ENCODE measurements at regions of chr3 and their contacts with region 1.

Region 1: DNA sequence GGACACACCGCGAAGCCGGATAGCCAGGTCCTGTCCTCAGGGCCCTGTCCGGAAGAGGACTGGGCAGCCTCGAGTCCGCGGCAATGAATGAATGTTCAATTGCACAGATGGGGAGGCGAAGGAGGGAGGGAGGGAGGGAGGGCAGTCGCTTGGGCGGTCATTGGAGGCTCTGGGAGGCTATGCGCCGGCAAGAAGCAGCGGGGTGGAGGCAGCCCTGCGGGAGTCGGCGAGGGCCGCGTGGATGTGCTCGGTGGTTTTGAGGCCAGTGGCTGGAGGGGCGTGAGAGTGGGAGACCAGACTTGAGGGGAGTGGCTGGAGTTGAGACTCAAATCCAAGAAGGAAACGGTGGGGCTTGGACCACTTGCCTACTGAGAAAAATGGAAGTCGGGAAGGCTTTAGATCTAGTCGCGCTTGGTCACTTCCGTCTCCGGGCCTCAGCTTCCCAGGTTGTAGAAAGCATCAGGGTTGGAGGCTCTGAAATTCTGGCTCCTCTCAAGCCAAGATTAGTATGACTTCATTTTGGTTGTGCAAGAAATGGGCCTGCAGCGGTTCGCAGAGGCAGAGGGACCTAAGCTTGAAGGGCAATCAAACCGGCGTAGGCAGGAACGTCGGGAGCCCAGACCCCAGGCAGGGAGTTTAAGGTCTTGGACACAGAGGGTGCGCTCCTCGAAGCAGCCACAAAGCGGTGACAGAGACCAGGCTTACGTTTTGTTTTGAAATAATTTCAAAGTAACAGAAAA is 21.1 kb upstream of the PLXND1 start:
- DNase-seq: peak; percentile 87
- H3K4me3 ChIP-seq: peak overlapping the region; percentile 58 to 75 (median 62)
- H3K27ac ChIP-seq: peak overlapping the region; percentile 95 to 99 (median 96)
- H3K4me1 ChIP-seq: peaks cover 0 to 46% (median 43%) of the 10 kb centered on the region in 4 donors
- H3K27me3 ChIP-seq: no peaks in the 10 kb centered on the region
- CTCF ChIP-seq: peak; percentile 54 to 86 (median 72)
- EP300 ChIP-seq: no peak
- POLR2A ChIP-seq: no peak

Region 2: GRCh38 chr3:129673882-129674797 is 46.5 kb after region 1 on chr3:
- intact Hi-C with region 1: no loop called
- DNase-seq: no peak
- H3K4me3 ChIP-seq: no peak overlapping the region
- H3K27ac ChIP-seq: no peak overlapping the region
- H3K4me1 ChIP-seq: peaks cover 0 to 4% (median 0%) of the 10 kb centered on the region in 4 donors
- H3K27me3 ChIP-seq: no peaks in the 10 kb centered on the region
- CTCF ChIP-seq: no peak
- EP300 ChIP-seq: no peak
- POLR2A ChIP-seq: no peak

Region 3: GRCh38 chr3:129824926-129825541 is 197.4 kb after region 1 on chr3:
- intact Hi-C with region 1: loop called (anchors 1 kb)
- DNase-seq: no peak
- H3K4me3 ChIP-seq: no peak overlapping the region
- H3K27ac ChIP-seq: no peak overlapping the region
- H3K4me1 ChIP-seq: peaks cover 0 to 11% (median 4%) of the 10 kb centered on the region in 4 donors
- H3K27me3 ChIP-seq: no peaks in the 10 kb centered on the region
- CTCF ChIP-seq: peak in 3 of 4 experiments; percentile 62 to 69 (median 63)
- EP300 ChIP-seq: no peak
- POLR2A ChIP-seq: no peak

Region 4: GRCh38 chr3:130014526-130014925 is 386.9 kb after region 1 on chr3:
- intact Hi-C with region 1: loop called (anchors 10 kb)
- DNase-seq: no peak
- H3K4me3 ChIP-seq: no peak overlapping the region
- H3K27ac ChIP-seq: no peak overlapping the region
- H3K4me1 ChIP-seq: no peaks in the 10 kb centered on the region
- H3K27me3 ChIP-seq: no peaks in the 10 kb centered on the region
- CTCF ChIP-seq: no peak
- EP300 ChIP-seq: no peak
- POLR2A ChIP-seq: no peak

Measured in sigmoid colon (tissue), 7 donors.